HCT116 (cell line): ENCODE measurements at regions of chr15 and their contacts with region 1.

Region 1: DNA sequence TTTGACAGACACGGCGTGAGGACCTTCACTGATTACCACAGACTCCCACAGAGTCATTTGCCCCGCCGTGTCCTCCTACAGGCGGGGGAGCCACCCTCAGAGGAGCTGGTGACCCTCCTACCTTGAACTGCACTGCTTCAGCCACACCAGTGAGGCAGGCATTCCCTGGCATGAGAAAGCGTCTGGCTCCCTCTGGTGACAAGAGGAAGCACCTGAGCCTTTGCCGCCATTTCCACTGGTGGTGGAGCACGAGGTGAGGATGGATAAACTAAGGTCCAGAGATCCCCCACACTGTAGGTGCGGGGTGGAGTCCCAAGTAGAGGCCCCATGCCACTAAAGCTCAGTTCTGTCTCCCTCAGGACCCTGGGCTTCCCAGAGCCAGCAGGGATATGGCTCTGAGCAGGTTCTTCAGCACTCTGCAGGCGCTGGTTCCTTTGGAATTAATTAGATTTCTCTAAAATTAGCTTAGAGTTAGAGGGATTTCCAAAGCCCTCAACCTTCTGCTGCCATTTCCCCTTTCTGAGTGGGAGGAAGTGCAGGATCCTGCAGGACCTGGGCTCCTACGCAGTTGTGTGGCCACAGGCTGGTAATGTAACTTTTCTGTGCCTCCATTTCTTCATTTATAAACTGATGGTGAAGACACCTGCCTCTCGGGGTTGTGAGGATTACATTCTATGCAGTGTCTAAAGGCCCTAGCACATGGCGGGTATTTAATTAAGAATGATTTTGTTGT is 224.0 kb downstream of the SLCO3A1 start:
- DNase-seq: peak; percentile 54
- ATAC-seq: peak; percentile 86
- H3K4me3 ChIP-seq: no peak overlapping the region
- H3K27ac ChIP-seq: no peak overlapping the region
- H3K4me1 ChIP-seq: no peaks in the 10 kb centered on the region; a peak in 1 of 4 replicates
- H3K27me3 ChIP-seq: no peaks in the 10 kb centered on the region
- CTCF ChIP-seq: peak; percentile 71 to 86 (median 76)
- POLR2A ChIP-seq: no peak
- RAD21 ChIP-seq: peak; percentile 96

Region 2: DNA sequence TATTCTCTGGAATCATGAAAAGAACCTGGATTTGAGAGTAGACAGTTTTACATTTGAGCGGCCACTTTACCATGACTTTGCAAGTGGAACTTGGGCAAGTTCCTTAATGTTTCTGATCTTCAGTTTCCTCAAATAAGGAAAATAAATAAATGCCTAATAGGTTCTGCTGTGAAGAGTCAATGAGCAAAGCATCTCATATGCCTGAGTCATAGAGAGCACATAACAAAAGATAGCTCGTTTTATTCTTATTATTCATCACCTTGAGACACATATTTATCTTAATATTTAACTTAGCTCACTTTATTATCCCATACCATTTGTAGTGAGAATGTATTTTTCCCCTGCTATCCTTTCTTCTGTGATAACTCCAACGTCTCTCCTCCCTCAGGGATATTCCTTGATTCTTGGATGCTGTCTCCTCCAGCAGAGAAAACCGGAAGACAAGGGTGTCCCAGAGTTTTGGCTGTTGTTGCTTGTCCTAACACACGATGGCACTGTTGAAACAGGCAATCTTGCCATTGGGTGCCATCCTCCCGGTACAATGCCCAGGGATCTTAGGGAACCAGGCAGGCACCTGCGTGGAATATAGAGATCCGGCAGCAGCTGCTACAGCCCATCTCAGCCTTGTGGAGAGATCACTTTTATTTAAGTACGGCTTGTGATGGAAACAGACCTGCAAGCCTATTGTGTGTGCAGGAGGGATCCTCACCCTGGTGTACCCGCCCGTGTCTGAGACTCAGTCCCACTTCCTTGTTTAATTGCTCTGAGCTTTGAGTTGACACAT is 1021.8 kb before region 1 on chr15:
- CTCF ChIA-PET with region 1: no interaction called
- POLR2A ChIA-PET with region 1: no interaction called
- RAD21 ChIA-PET with region 1: no interaction called
- intact Hi-C with region 1: loop called (anchors 1 kb)
- DNase-seq: peak; percentile 75
- ATAC-seq: peak; percentile 98
- H3K4me3 ChIP-seq: 0 out of 4 replicates have a peak overlapping the region, but pooled peaks of 1 of the 2 experiments have one; percentile 18
- H3K27ac ChIP-seq: no peak overlapping the region
- H3K4me1 ChIP-seq: peaks cover 0 to 6% of the 10 kb centered on the region in 2 experiments; a peak in 1 of 4 replicates
- H3K27me3 ChIP-seq: peaks cover 67% of the 10 kb centered on the region
- CTCF ChIP-seq: peak; percentile 83 to 89 (median 88)
- POLR2A ChIP-seq: no peak
- RAD21 ChIP-seq: peak; percentile 94

Region 3: DNA sequence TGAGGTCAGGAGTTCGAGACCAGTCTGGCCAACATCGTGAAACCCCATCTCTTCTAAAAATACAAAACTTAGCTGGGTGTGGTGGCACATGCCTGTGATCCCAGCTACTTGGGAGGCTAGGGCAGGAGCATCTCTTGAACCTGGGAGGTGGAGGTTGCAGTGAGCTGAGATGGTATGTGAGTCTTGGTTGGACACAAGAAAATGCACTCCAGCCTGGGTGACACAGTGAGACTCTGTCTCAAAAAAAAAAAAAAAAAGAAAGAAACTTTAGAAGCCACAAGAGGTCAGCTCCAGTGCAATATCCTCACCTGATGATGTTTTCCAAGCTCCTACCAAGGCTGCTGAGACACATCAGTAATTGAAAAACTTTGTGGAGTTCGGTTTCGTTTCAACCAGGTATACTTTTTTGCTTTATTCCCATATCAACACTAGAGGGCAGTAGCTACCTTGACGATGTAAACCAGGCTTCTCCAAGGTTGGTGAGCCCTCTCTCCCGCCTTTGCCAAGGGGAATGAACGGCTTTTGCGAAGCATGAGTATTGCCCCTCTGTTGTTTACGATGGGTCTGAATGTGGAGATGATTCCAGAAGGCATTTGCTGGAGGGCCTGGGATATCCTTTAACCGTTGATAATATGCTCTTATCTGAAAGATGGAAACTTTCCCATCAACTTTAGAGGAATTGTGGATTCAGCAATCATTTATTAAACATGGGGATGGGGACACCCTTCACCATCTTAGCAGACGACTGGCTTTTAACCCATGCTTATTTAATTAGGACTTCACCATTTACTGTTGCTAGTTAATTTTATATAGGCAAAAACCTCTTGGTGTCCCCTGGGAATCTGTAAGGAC is 774.7 kb before region 1 on chr15:
- CTCF ChIA-PET with region 1: interaction called, 22 read pairs
- POLR2A ChIA-PET with region 1: no interaction called
- RAD21 ChIA-PET with region 1: no interaction called
- intact Hi-C with region 1: loop called (anchors 1 kb)
- DNase-seq: peak; percentile 51
- ATAC-seq: peak; percentile 89
- H3K4me3 ChIP-seq: no peak overlapping the region
- H3K27ac ChIP-seq: no peak overlapping the region
- H3K4me1 ChIP-seq: no peaks in the 10 kb centered on the region
- H3K27me3 ChIP-seq: peaks cover 74% of the 10 kb centered on the region
- CTCF ChIP-seq: peak; percentile 67 to 78 (median 75)
- POLR2A ChIP-seq: no peak
- RAD21 ChIP-seq: peak; percentile 87

Region 4: DNA sequence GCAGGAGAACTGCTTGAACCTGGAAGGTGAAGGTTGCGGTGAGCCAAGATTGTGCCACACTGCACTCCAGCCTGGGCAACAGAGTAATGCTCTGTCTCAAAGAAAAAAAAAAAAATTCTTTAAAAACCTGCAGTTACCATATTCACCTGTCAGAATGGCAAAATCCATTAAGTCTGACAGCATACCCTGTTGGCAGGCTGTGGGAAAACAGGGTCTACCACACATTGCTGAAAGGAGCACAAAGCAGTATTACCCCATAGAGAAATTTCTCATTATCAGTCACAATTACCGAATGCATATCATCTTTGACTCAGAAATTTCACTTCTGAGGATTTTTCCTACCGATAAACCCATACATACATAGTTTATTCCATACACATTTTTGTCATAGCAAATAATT is 488.2 kb before region 1 on chr15:
- CTCF ChIA-PET with region 1: no interaction called
- POLR2A ChIA-PET with region 1: no interaction called
- RAD21 ChIA-PET with region 1: no interaction called
- intact Hi-C with region 1: no loop called
- DNase-seq: no peak
- ATAC-seq: no peak
- H3K4me3 ChIP-seq: no peak overlapping the region
- H3K27ac ChIP-seq: no peak overlapping the region
- H3K4me1 ChIP-seq: no peaks in the 10 kb centered on the region
- H3K27me3 ChIP-seq: no peaks in the 10 kb centered on the region
- CTCF ChIP-seq: peak in 1 of 3 experiments; percentile 15; a peak in 1 of 6 replicates
- POLR2A ChIP-seq: no peak
- RAD21 ChIP-seq: no peak

Region 5: GRCh38 chr15:91706322-91707032 is 371.0 kb before region 1 on chr15:
- CTCF ChIA-PET with region 1: interaction called, 20 read pairs
- POLR2A ChIA-PET with region 1: no interaction called
- RAD21 ChIA-PET with region 1: interaction called, 3 to 4 read pairs
- intact Hi-C with region 1: loop called (anchors 2 kb)
- DNase-seq: peak; percentile 49
- ATAC-seq: peak; percentile 90
- H3K4me3 ChIP-seq: no peak overlapping the region
- H3K27ac ChIP-seq: no peak overlapping the region
- H3K4me1 ChIP-seq: peaks cover 0 to 11% of the 10 kb centered on the region in 2 experiments; a peak in 2 of 4 replicates
- H3K27me3 ChIP-seq: peaks cover 20% of the 10 kb centered on the region; the same call in 1 of the 2 replicates
- CTCF ChIP-seq: peak; percentile 55 to 95 (median 95)
- POLR2A ChIP-seq: no peak
- RAD21 ChIP-seq: peak; percentile 59

Region 6: DNA sequence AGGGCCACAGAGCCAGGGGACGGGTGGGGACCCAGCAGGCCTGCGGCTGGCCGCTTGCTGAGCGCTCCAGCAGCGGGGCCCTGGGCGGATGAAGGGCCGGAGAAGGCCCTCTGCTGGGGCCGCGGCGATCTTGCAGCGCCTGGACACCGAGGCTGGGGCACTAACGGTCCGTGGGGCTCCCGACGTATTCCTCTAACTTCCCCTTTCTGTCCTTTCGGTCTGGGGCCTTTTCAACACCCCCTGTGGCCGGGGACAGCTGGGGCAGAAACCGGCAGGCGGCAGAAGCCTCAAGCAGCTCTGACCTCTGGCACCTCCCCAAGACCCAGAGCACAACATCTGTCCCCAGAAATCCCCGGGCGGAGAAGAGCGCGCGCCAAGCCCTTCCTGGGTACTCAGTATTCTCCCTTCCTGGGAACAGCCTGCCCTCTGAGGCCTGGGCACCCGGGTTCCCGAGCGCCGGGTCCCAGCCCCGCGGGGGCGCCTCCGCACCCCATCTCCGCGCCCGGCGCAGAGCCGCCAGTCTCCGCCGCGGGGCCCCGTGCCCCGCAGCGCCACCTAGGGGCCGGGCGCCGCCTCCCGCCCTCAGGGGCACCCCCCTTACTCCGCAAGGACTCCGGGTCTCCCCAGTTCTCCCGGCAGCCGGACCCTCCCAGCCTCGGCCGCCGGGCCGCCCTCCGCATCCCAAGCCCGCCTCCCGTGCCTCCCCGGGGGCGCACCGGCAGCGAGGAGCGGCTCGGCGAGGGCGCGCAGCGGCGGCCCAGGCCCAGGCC is 224.6 kb before region 1 on chr15:
- CTCF ChIA-PET with region 1: interaction called, 9 read pairs
- POLR2A ChIA-PET with region 1: no interaction called
- RAD21 ChIA-PET with region 1: interaction called in 1 of 2 experiments, 4 read pairs
- intact Hi-C with region 1: loop called (anchors 1 kb)
- DNase-seq: no peak
- ATAC-seq: peak; percentile 80
- H3K4me3 ChIP-seq: peak overlapping the region; percentile 51 to 65
- H3K27ac ChIP-seq: no peak overlapping the region; the same call in 1 of the 2 replicates
- H3K4me1 ChIP-seq: peaks cover 0 to 16% of the 10 kb centered on the region in 2 experiments; a peak in 2 of 4 replicates
- H3K27me3 ChIP-seq: peaks cover 11% of the 10 kb centered on the region; the same call in 1 of the 2 replicates
- CTCF ChIP-seq: peak; percentile 43 to 70 (median 60)
- POLR2A ChIP-seq: no peak
- RAD21 ChIP-seq: peak; percentile 52

Region 7: GRCh38 chr15:91885714-91886270 is 191.7 kb before region 1 on chr15:
- CTCF ChIA-PET with region 1: no interaction called
- POLR2A ChIA-PET with region 1: no interaction called
- RAD21 ChIA-PET with region 1: no interaction called
- intact Hi-C with region 1: loop called (anchors 5 kb)
- DNase-seq: no peak
- ATAC-seq: peak; percentile 27; the same call in 1 of the 2 replicates
- H3K4me3 ChIP-seq: no peak overlapping the region
- H3K27ac ChIP-seq: no peak overlapping the region
- H3K4me1 ChIP-seq: peaks cover 0 to 7% of the 10 kb centered on the region in 2 experiments; a peak in 2 of 4 replicates
- H3K27me3 ChIP-seq: no peaks in the 10 kb centered on the region
- CTCF ChIP-seq: peak in 2 of 3 experiments; percentile 13 to 18; a peak in 1 of 6 replicates
- POLR2A ChIP-seq: no peak
- RAD21 ChIP-seq: peak; percentile 39; the same call in 1 of the 2 replicates

Region 8: GRCh38 chr15:92091155-92091734 is 13.7 kb after region 1 on chr15:
- CTCF ChIA-PET with region 1: interaction called, 12 read pairs
- POLR2A ChIA-PET with region 1: no interaction called
- RAD21 ChIA-PET with region 1: no interaction called
- intact Hi-C with region 1: no loop called
- DNase-seq: peak; percentile 15
- ATAC-seq: peak; percentile 98
- H3K4me3 ChIP-seq: no peak overlapping the region
- H3K27ac ChIP-seq: no peak overlapping the region
- H3K4me1 ChIP-seq: no peaks in the 10 kb centered on the region
- H3K27me3 ChIP-seq: peaks cover 7% of the 10 kb centered on the region
- CTCF ChIP-seq: peak; percentile 56 to 84 (median 81); a peak in 5 of 6 replicates
- POLR2A ChIP-seq: no peak
- RAD21 ChIP-seq: peak; percentile 76

Region 9: GRCh38 chr15:92226014-92226612 is 148.6 kb after region 1 on chr15:
- CTCF ChIA-PET with region 1: no interaction called
- POLR2A ChIA-PET with region 1: no interaction called
- RAD21 ChIA-PET with region 1: no interaction called
- intact Hi-C with region 1: no loop called
- DNase-seq: peak; percentile 16
- ATAC-seq: peak; percentile 83
- H3K4me3 ChIP-seq: no peak overlapping the region
- H3K27ac ChIP-seq: no peak overlapping the region
- H3K4me1 ChIP-seq: no peaks in the 10 kb centered on the region
- H3K27me3 ChIP-seq: no peaks in the 10 kb centered on the region; the same call in 1 of the 2 replicates
- CTCF ChIP-seq: peak; percentile 38 to 58 (median 51); a peak in 5 of 6 replicates
- POLR2A ChIP-seq: no peak
- RAD21 ChIP-seq: peak; percentile 60